ENCODE measurements at regions of chr1 and their contacts with region 1.

Region 1: GRCh38 chr1:27284425-27285273 is 37.3 kb upstream of the TMEM222 start:
- DNase-seq: peak; percentile 72 to 89 (median 79)
- ATAC-seq: peak in 3 of 4 donors; percentile 79 to 82 (median 80)
- H3K4me3 ChIP-seq: no peak overlapping the region
- H3K27ac ChIP-seq: no peak overlapping the region
- H3K4me1 ChIP-seq: no peaks in the 10 kb centered on the region
- H3K27me3 ChIP-seq: no peaks in the 10 kb centered on the region
- CTCF ChIP-seq: peak; percentile 79 to 92 (median 88)
- POLR2A ChIP-seq: no peak

Region 2: GRCh38 chr1:27192039-27192529 is 92.6 kb before region 1 on chr1:
- intact Hi-C with region 1: loop called in 5 of 10 experiments (anchors 2 to 10 kb)
- DNase-seq: no peak
- ATAC-seq: peak in 1 of 4 donors; percentile 31
- H3K4me3 ChIP-seq: no peak overlapping the region
- H3K27ac ChIP-seq: no peak overlapping the region
- H3K4me1 ChIP-seq: peaks cover 0 to 7% (median 0%) of the 10 kb centered on the region in 12 donors
- H3K27me3 ChIP-seq: no peaks in the 10 kb centered on the region
- CTCF ChIP-seq: no peak
- POLR2A ChIP-seq: no peak

Region 3: GRCh38 chr1:27203946-27204345 is 80.7 kb before region 1 on chr1:
- intact Hi-C with region 1: loop called in 6 of 10 experiments (anchors 2 to 10 kb)
- DNase-seq: no peak
- ATAC-seq: no peak
- H3K4me3 ChIP-seq: no peak overlapping the region
- H3K27ac ChIP-seq: no peak overlapping the region
- H3K4me1 ChIP-seq: no peaks in the 10 kb centered on the region
- H3K27me3 ChIP-seq: no peaks in the 10 kb centered on the region
- CTCF ChIP-seq: no peak
- POLR2A ChIP-seq: no peak